ENCODE measurements at regions of chr2 and their contacts with region 1.

Region 1: GRCh38 chr2:177254433-177255226 is 9.9 kb downstream of the NFE2L2 start:
- DNase-seq: peak; percentile 86
- ATAC-seq: peak; percentile 94
- H3K4me3 Mint-ChIP-seq: no peak overlapping the region
- H3K27ac Mint-ChIP-seq: peak overlapping the region; percentile 86
- H3K4me1 Mint-ChIP-seq: peaks cover 55% of the 10 kb centered on the region
- H3K27me3 Mint-ChIP-seq: no peaks in the 10 kb centered on the region
- CTCF ChIP-seq: peak; percentile 90

Region 2: GRCh38 chr2:176997074-176997791 is 257.4 kb before region 1 on chr2:
- CTCF ChIA-PET with region 1: no interaction called
- POLR2A ChIA-PET with region 1: no interaction called
- DNase-seq: no peak
- ATAC-seq: no peak
- H3K4me3 Mint-ChIP-seq: no peak overlapping the region
- H3K27ac Mint-ChIP-seq: no peak overlapping the region
- H3K4me1 Mint-ChIP-seq: peaks cover 12% of the 10 kb centered on the region
- H3K27me3 Mint-ChIP-seq: no peaks in the 10 kb centered on the region
- CTCF ChIP-seq: no peak

Region 3: GRCh38 chr2:177239932-177240630 is 14.5 kb before region 1 on chr2:
- CTCF ChIA-PET with region 1: interaction called, 13 read pairs
- POLR2A ChIA-PET with region 1: no interaction called
- DNase-seq: no peak
- ATAC-seq: no peak; the same call in none of the 2 replicates
- H3K4me3 Mint-ChIP-seq: no peak overlapping the region
- H3K27ac Mint-ChIP-seq: no peak overlapping the region
- H3K4me1 Mint-ChIP-seq: peaks cover 50% of the 10 kb centered on the region
- H3K27me3 Mint-ChIP-seq: no peaks in the 10 kb centered on the region
- CTCF ChIP-seq: no peak